CD8-positive, alpha-beta memory T cell (primary cell): ENCODE measurements at regions of chr17 and their contacts with region 1.

Region 1: DNA sequence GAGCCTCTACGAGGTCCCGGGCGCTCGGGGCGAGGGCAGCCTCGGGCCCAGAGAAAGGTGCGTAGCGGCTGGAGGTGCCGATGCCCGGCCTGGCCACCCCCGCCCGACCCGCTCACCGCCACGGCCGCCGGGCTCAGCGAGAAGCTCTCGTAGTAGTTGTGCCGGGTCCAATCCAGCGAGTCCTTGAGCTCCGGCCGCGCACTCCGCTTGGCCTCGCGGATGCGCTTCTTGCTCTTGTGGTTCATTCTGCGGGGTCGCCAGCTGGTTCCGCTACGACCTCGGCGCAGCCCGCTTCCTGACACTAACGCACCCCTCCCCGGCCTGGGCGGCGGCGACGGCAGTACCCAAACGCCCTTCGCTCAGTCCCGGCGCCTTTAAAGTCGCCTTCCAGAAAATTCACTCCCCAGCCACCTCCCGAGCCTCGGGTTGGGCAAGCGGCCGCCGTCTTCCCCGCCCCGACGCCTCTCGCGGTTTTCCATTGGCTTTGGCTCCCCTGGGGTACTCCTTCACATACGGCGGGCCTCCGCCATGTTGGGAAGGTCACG is at the start of gene JMJD6:
- DNase-seq: peak in 1 of 5 donors; percentile 94
- H3K4me3 ChIP-seq: peak within 1 kb of the TSS; percentile 82
- H3K4me3 Mint-ChIP-seq: peak within 1 kb of the TSS; percentile 93 to 100 (median 97)
- H3K27ac ChIP-seq: peak within 1 kb of the TSS; percentile 93
- H3K27ac Mint-ChIP-seq: peak within 1 kb of the TSS; percentile 96 to 100 (median 99)
- H3K4me1 ChIP-seq: peaks cover 48% of the 10 kb centered on the region
- H3K4me1 Mint-ChIP-seq: peaks cover 46 to 75% (median 59%) of the 10 kb centered on the region in 3 donors
- H3K27me3 ChIP-seq: no peaks in the 10 kb centered on the region
- H3K27me3 Mint-ChIP-seq: peaks cover 0 to 4% of the 10 kb centered on the region in 2 donors
- total RNA-seq, gene JMJD6: 62.7 to 66.8 TPM

Region 2: DNA sequence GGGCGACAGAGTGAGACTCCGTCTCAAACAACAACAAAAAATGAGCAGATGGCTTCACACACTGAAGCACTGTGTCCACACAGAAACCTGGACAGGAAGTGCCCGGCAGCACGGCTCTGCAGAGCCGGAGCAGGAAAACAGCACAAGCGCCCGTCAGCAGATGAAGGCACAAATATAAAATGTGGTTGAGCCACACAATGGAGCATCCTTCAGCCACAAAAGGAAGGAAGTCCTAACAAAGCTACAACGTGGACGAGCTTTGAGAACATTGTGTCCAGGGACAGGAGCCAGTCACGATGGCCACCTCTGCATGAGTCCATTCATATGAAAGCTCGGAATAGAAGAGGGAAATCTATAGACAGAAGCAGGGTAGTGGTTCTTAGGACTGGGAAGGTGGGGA is 240.7 kb before region 1 on chr17:
- CTCF ChIA-PET with region 1: no interaction called
- POLR2A ChIA-PET with region 1: interaction called, 11 read pairs
- DNase-seq: no peak
- H3K4me3 ChIP-seq: no peak overlapping the region
- H3K4me3 Mint-ChIP-seq: no peak overlapping the region
- H3K27ac ChIP-seq: no peak overlapping the region
- H3K27ac Mint-ChIP-seq: peak overlapping the region in 1 of 8 donors; percentile 43
- H3K4me1 ChIP-seq: no peaks in the 10 kb centered on the region
- H3K4me1 Mint-ChIP-seq: peaks cover 11 to 32% (median 12%) of the 10 kb centered on the region in 3 donors
- H3K27me3 ChIP-seq: no peaks in the 10 kb centered on the region
- H3K27me3 Mint-ChIP-seq: no peaks in the 10 kb centered on the region

Region 3: DNA sequence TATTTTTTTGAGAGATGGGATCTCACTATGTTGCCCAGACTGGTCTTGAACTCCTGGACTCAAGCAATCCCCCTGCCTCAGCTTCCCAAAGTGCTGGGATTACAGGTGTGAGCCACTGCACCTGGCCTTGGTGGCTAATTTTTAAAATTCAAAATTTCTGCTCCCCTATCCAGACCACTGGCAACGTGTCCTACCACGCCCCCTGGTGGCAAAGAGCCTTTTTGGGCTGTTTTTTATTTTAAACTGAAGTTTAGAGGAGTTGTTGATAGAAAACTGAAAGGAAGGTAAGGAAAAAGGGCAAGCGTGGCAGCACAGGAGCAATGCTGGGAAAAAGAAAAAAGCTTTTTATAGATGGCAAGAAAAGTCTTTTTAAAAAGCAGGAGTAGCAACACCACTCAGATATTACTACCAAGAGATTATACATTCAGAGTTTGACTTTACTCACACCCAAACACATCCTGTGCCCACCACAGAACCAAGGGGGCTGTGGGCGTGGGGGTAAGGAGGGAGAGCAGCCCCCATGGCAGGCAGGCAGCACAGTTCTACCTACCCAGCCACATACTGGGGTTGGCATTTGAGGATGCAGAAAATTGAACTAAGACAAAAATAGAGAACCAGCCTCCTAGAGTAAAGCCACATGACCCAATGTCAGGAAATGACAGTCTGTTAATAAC is 11.3 kb before region 1 on chr17:
- CTCF ChIA-PET with region 1: interaction called, 52 read pairs
- POLR2A ChIA-PET with region 1: interaction called, 51 read pairs
- DNase-seq: peak; percentile 64 to 82 (median 67)
- H3K4me3 ChIP-seq: no peak overlapping the region
- H3K4me3 Mint-ChIP-seq: peak overlapping the region; percentile 24 to 75 (median 71)
- H3K27ac ChIP-seq: peak overlapping the region; percentile 57
- H3K27ac Mint-ChIP-seq: peak overlapping the region; percentile 91 to 99 (median 98)
- H3K4me1 ChIP-seq: peaks cover 37% of the 10 kb centered on the region
- H3K4me1 Mint-ChIP-seq: peaks cover 42 to 67% (median 44%) of the 10 kb centered on the region in 3 donors
- H3K27me3 ChIP-seq: no peaks in the 10 kb centered on the region
- H3K27me3 Mint-ChIP-seq: no peaks in the 10 kb centered on the region

Region 4: GRCh38 chr17:76753061-76753961 is 27.0 kb after region 1 on chr17:
- CTCF ChIA-PET with region 1: interaction called, 4 read pairs
- POLR2A ChIA-PET with region 1: interaction called, 13 read pairs
- DNase-seq: peak in 3 of 5 donors; percentile 60 to 87 (median 61)
- H3K4me3 ChIP-seq: peak overlapping the region; percentile 47
- H3K4me3 Mint-ChIP-seq: peak overlapping the region; percentile 81 to 95 (median 89)
- H3K27ac ChIP-seq: peak overlapping the region; percentile 67
- H3K27ac Mint-ChIP-seq: peak overlapping the region; percentile 72 to 98 (median 96)
- H3K4me1 ChIP-seq: peaks cover 27% of the 10 kb centered on the region
- H3K4me1 Mint-ChIP-seq: peaks cover 26 to 35% (median 28%) of the 10 kb centered on the region in 3 donors
- H3K27me3 ChIP-seq: no peaks in the 10 kb centered on the region
- H3K27me3 Mint-ChIP-seq: no peaks in the 10 kb centered on the region

Region 5: DNA sequence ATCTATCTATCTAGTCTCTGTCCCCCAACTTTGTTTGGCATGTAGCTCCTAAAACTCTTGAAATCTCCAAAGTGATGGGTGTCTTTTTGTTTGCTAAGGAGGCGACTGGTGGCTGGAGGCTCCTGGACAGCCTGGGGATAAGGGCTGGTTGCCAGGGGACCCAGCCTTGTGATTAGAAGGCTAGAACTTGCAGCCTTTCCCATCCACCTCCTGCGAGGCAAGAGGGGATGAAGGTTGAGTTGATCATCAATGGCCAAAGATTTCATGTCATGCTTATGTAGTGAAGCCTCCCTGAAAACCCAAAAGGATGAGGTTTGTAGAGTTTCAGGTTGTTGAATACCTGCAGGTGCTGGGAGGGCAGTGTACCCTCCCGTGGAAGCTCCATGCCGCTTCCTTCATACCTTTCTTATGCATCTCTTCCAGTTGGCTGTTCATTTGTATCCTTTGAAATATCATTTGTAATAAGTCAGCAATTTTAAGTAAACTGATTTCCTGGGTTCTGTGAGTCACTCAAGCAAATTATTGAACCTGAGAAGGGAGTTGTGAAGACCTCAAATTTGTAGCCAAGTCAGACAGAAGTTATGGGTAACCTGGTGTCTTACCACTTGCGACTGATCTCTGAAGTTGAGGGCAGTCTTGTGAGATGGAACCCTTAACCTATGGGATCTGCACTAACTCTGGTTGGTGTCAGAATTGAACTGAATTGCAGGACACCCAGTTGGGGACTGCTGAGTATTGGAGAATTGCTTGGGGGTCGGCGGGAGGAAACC is 616.9 kb after region 1 on chr17:
- CTCF ChIA-PET with region 1: no interaction called
- POLR2A ChIA-PET with region 1: interaction called, 10 read pairs
- DNase-seq: peak in 1 of 5 donors; percentile 20
- H3K4me3 ChIP-seq: peak overlapping the region; percentile 70
- H3K4me3 Mint-ChIP-seq: peak overlapping the region; percentile 65 to 85 (median 76)
- H3K27ac ChIP-seq: no peak overlapping the region
- H3K27ac Mint-ChIP-seq: peak overlapping the region; percentile 74 to 92 (median 88)
- H3K4me1 ChIP-seq: peaks cover 55% of the 10 kb centered on the region
- H3K4me1 Mint-ChIP-seq: peaks cover 59 to 77% (median 69%) of the 10 kb centered on the region in 3 donors
- H3K27me3 ChIP-seq: no peaks in the 10 kb centered on the region
- H3K27me3 Mint-ChIP-seq: no peaks in the 10 kb centered on the region